ENCODE measurements at regions of chr10 and their contacts with region 1.

Region 1: DNA sequence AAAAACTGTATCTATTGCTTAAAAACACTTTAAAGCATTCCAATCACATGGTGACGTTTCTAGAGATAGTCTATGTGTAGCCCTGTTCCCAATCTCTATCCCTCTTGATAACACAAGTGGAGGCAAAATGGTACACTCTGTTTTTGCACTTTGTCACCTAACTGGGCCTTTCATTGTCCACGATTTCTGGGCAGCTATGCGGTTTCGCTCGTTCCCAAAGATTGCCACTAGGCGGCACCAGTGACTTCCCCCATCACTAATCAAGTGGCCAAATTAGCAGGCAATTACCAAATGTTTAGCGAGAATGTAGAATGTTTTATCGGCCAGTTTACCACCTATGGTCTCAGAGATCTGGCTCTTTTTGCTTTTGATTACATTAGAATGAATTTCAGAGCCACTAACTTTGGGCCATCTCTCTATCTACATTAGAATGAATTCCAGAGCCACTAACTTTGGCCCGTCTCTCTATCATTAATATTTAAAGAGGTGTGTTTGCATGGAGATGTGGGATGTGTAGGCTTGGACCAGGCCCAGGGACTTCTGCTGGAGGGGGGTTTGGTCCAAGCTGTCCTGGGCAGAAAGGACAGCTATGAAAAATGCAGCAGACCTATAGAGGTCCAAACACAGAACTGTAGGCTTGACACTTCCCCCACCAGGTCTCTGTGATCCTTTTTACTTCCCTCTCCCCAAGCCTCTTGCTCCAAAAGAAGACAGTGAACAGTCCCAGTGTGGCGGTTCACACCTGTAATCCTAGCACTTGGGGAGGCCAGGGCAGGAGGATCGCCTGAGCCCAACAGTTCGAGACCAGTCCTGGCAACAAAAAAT is 90.1 kb downstream of the EPC1 start:
- DNase-seq: no peak
- H3K4me3 ChIP-seq: no peak overlapping the region
- H3K27me3 ChIP-seq: no peaks in the 10 kb centered on the region
- CTCF ChIP-seq: peak; percentile 95

Region 2: GRCh38 chr10:32244421-32245207 is 12.2 kb before region 1 on chr10:
- CTCF ChIA-PET with region 1: interaction called, 20 read pairs
- POLR2A ChIA-PET with region 1: no interaction called
- DNase-seq: no peak
- H3K4me3 ChIP-seq: no peak overlapping the region
- H3K27me3 ChIP-seq: no peaks in the 10 kb centered on the region
- CTCF ChIP-seq: no peak

Region 3: GRCh38 chr10:32266979-32267378 is 10.2 kb after region 1 on chr10:
- CTCF ChIA-PET with region 1: interaction called, 11 read pairs
- POLR2A ChIA-PET with region 1: no interaction called
- DNase-seq: no peak
- H3K4me3 ChIP-seq: no peak overlapping the region
- H3K27me3 ChIP-seq: no peaks in the 10 kb centered on the region
- CTCF ChIP-seq: no peak

Region 4: GRCh38 chr10:32346134-32346550 is 89.3 kb after region 1 on chr10:
- CTCF ChIA-PET with region 1: interaction called, 55 read pairs
- POLR2A ChIA-PET with region 1: interaction called, 4 read pairs
- DNase-seq: peak; percentile 71
- H3K4me3 ChIP-seq: peak overlapping the region; percentile 93
- H3K27me3 ChIP-seq: no peaks in the 10 kb centered on the region
- CTCF ChIP-seq: peak; percentile 81

Region 5: GRCh38 chr10:32367793-32368453 is 111.1 kb after region 1 on chr10:
- CTCF ChIA-PET with region 1: interaction called, 18 read pairs
- POLR2A ChIA-PET with region 1: no interaction called
- DNase-seq: peak; percentile 12
- H3K4me3 ChIP-seq: no peak overlapping the region
- H3K27me3 ChIP-seq: no peaks in the 10 kb centered on the region
- CTCF ChIP-seq: peak; percentile 80

Region 6: GRCh38 chr10:32378363-32379317 is 121.8 kb after region 1 on chr10:
- CTCF ChIA-PET with region 1: interaction called, 8 read pairs
- POLR2A ChIA-PET with region 1: interaction called, 12 read pairs
- DNase-seq: peak; percentile 48
- H3K4me3 ChIP-seq: peak overlapping the region; percentile 84
- H3K27me3 ChIP-seq: no peaks in the 10 kb centered on the region
- CTCF ChIP-seq: no peak